Activated CD8-positive, alpha-beta memory T cell treated with anti-CD3 and anti-CD28 coated beads, Interleukin-2, amount 10 ng/mL, durations not matched to agents 7 days and 5 days (primary cell): ENCODE measurements at regions of chr10 and their contacts with region 1.

Region 1: DNA sequence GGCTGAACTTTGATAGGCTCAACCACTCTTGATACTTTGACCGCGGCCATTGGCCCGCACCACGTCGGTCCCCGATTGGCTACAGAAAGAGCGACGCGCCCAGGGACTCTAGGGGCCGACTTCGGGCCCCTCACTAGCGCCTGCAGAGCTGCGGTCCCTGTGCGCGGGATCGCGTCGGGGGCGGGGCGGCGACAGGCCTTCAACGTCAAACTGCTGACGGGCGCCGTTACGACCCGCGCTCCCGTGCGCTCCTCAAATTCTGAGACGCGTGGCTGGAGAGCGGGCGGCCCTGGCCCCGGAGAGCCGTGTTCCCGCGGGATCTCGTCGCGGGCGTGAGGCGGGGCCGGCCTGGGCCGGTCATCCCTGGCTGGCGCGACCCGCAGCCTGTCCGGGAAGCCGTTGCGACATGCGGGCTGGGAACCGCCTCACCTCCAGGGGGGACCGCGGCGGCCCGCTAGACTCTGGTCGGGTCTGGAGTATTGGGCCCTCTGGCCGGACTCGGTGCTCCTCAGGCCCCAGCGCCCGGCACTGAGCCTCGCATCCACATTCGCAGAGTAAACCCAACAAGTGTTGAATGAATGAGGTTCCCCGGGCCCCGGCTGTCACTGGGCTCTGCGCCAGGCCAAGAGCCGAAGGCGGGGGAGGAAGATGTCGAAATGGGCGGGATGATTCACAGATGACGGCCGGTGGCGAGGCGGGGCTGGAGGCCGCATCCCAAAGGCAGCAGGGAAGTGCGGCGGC is 644 bp upstream of the SLC25A28 start:
- DNase-seq: peak; percentile 84
- ATAC-seq: peak; percentile 92
- H3K4me3 Mint-ChIP-seq: peak overlapping the region; percentile 95
- H3K27ac Mint-ChIP-seq: peak overlapping the region; percentile 97
- H3K4me1 Mint-ChIP-seq: peaks cover 42% of the 10 kb centered on the region
- H3K27me3 Mint-ChIP-seq: no peaks in the 10 kb centered on the region

Region 2: DNA sequence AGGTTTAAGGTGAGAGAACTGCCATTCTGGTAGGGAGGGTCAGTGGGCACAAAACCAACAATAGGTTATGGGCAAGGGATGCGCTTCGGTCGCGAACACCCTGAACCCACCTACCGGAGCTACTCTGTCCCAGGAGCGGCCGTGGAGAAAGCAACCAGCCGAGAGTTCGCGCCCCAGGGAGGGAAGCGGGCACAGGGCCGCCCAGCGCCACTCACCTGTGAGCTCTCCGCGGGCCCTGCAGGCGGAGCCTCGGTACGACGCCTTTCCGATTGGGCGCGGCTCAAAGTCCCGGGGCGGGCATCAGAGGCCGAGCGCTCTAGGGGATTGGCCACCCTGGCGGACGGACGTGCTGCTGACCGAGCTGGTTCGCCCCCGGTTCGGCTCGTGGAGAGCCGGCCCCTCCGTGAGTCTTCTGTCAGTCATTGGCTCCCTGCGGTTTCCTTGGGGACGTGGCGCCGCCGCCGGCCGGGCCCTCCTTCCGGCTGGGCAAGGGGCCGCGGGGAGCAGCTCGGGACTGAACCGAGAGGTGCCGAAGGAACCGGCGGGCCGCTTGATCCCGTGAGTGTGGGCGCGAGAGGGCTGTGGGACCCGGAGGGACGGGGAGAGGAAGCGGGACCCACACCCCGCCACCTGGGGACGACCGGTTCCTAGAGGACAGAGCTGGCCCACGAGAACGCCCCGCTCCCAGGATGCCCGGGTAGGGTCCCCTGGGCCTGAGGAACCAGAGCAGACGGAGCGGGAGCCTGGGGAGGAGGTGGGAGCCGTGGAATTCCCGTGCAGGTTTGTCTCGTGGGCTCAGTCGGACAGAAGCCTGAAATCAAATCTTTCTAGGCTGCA is 38.4 kb after region 1 on chr10 and contains the start of gene ENTPD7:
- CTCF ChIA-PET with region 1: interaction called, 18 read pairs
- DNase-seq: peak; percentile 96
- ATAC-seq: peak; percentile 99
- H3K4me3 Mint-ChIP-seq: peak within 1 kb of the TSS; percentile 80
- H3K27ac Mint-ChIP-seq: peak within 1 kb of the TSS; percentile 62
- H3K4me1 Mint-ChIP-seq: peaks cover 23% of the 10 kb centered on the region
- H3K27me3 Mint-ChIP-seq: peaks cover 26% of the 10 kb centered on the region
- total RNA-seq, gene ENTPD7: 4.3 to 7.4 TPM